HepG2 (cell line): ENCODE measurements at regions of chr7 and their contacts with region 1.

Region 1: DNA sequence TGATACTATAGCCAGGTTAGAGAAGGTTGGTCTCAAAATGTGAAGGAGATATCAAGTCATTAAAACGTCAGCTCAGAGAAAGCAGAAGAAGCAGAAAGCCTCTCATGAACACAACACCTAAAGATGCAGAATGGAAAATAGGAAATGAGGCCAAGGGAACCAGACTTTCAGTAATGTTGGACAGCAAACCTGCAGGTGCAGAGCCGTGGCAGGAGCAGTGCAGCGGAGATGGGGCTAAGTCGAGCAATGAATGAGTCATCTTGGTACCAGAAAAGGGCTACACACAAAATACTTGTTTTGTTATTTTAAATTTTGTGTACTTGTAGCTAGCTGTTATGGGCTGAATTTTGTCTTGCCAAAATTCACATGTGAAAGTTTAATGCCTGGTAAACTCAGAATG is 479.6 kb upstream of the POM121L12 start:
- DNase-seq: no peak
- ATAC-seq: no peak
- H3K4me3 ChIP-seq: no peak overlapping the region
- H3K27ac ChIP-seq: no peak overlapping the region
- H3K4me1 ChIP-seq: no peaks in the 10 kb centered on the region
- H3K27me3 ChIP-seq: no peaks in the 10 kb centered on the region
- CTCF ChIP-seq: no peak
- EP300 ChIP-seq: no peak
- POLR2A ChIP-seq: no peak
- RAD21 ChIP-seq: no peak

Region 2: DNA sequence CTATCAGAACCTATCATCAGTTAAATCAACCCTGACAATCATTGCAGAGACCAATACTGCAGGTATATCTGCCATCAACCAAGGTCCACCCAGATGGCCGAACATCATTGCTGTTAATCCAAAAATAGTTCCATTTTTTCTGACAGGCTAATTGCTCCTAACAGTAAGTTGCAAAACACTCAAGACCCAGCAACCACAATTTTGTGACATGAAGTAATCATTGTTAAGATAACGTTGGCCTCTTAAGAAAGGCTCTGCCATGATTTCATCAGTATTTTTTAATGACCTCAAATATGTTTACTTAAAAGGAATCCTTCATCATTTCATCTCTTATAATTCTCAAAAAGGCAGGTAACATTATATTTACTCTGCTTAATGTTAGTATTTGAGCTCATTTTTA is 73.7 kb before region 1 on chr7:
- CTCF ChIA-PET with region 1: no interaction called
- POLR2A ChIA-PET with region 1: no interaction called
- in situ Hi-C with region 1: no loop called
- intact Hi-C with region 1: loop called (anchors 2 kb)
- DNase-seq: no peak
- ATAC-seq: no peak
- H3K4me3 ChIP-seq: no peak overlapping the region
- H3K27ac ChIP-seq: no peak overlapping the region
- H3K4me1 ChIP-seq: no peaks in the 10 kb centered on the region
- H3K27me3 ChIP-seq: no peaks in the 10 kb centered on the region
- CTCF ChIP-seq: no peak
- EP300 ChIP-seq: no peak
- POLR2A ChIP-seq: no peak
- RAD21 ChIP-seq: no peak